ENCODE measurements at regions of chr2 and their contacts with region 1.

Region 1: DNA sequence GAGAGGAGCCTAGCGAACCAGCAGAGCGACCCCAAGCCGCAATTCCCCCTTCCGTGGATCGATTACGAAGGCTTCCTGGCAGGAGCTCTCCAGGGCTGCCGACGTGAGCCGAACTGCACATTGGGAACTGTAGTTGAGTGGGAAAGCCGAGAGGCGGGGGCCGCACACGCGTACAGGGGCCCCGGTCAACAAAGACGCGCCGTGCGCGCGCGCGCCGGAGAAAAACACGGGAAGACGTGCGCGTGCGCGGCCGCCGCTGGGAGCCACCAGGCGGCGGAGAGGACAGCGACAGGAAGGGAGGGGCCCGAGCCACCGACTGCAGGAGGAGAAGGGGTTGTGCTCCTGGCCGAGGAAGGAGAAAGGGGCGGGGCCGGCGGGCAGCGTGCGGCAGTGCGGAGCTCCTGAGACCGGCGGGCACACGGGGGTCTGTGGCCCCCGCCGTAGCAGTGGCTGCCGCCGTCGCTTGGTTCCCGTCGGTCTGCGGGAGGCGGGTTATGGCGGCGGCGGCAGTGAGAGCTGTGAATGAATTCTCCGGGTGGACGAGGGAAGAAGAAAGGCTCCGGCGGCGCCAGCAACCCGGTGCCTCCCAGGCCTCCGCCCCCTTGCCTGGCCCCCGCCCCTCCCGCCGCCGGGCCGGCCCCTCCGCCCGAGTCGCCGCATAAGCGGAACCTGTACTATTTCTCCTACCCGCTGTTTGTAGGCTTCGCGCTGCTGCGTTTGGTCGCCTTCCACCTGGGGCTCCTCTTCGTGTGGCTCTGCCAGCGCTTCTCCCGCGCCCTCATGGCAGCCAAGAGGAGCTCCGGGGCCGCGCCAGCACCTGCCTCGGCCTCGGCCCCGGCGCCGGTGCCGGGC is at the start of gene SPAST:
- DNase-seq: peak; percentile 89 to 97
- ATAC-seq: peak; percentile 85 to 94 (median 86)
- H3K4me3 ChIP-seq: peak within 1 kb of the TSS; percentile 86
- H3K4me3 Mint-ChIP-seq: peak within 1 kb of the TSS; percentile 99
- H3K27ac ChIP-seq: peak within 1 kb of the TSS; percentile 74
- H3K27ac Mint-ChIP-seq: peak within 1 kb of the TSS; percentile 92 to 97
- H3K4me1 ChIP-seq: peaks cover 12% of the 10 kb centered on the region
- H3K4me1 Mint-ChIP-seq: peaks cover 33 to 36% of the 10 kb centered on the region in 2 donors
- H3K27me3 ChIP-seq: no peaks in the 10 kb centered on the region
- H3K27me3 Mint-ChIP-seq: no peaks in the 10 kb centered on the region
- CTCF ChIP-seq: peak; percentile 48
- total RNA-seq, gene SPAST: 16.8 to 27.5 (median 22.5) TPM

Region 2: GRCh38 chr2:31962757-31963361 is 100.7 kb before region 1 on chr2:
- intact Hi-C with region 1: no loop called
- DNase-seq: no peak
- ATAC-seq: no peak
- H3K4me3 ChIP-seq: no peak overlapping the region
- H3K4me3 Mint-ChIP-seq: no peak overlapping the region
- H3K27ac ChIP-seq: no peak overlapping the region
- H3K27ac Mint-ChIP-seq: peak overlapping the region; percentile 16 to 45
- H3K4me1 ChIP-seq: peaks cover 25% of the 10 kb centered on the region
- H3K4me1 Mint-ChIP-seq: peaks cover 40 to 51% of the 10 kb centered on the region in 2 donors
- H3K27me3 ChIP-seq: no peaks in the 10 kb centered on the region
- H3K27me3 Mint-ChIP-seq: no peaks in the 10 kb centered on the region
- CTCF ChIP-seq: no peak

Region 3: GRCh38 chr2:32010670-32011484 is 52.7 kb before region 1 on chr2 and contains the start of gene MEMO1:
- intact Hi-C with region 1: loop called (anchors 1 kb)
- DNase-seq: peak; percentile 83 to 95
- ATAC-seq: peak; percentile 72 to 88 (median 73)
- H3K4me3 ChIP-seq: peak within 1 kb of the TSS; percentile 68
- H3K4me3 Mint-ChIP-seq: peak within 1 kb of the TSS; percentile 92
- H3K27ac ChIP-seq: peak within 1 kb of the TSS; percentile 71
- H3K27ac Mint-ChIP-seq: peak within 1 kb of the TSS; percentile 89 to 93
- H3K4me1 ChIP-seq: peaks cover 22% of the 10 kb centered on the region
- H3K4me1 Mint-ChIP-seq: peaks cover 34 to 42% of the 10 kb centered on the region in 2 donors
- H3K27me3 ChIP-seq: no peaks in the 10 kb centered on the region
- H3K27me3 Mint-ChIP-seq: no peaks in the 10 kb centered on the region
- CTCF ChIP-seq: no peak
- total RNA-seq, gene MEMO1: 48.6 to 51.9 (median 51.7) TPM

Region 4: GRCh38 chr2:32039447-32040219 is 23.9 kb before region 1 on chr2 and contains the start of gene DPY30:
- intact Hi-C with region 1: loop called (anchors 1 kb)
- DNase-seq: peak; percentile 88 to 96
- ATAC-seq: peak; percentile 97 to 98 (median 97)
- H3K4me3 ChIP-seq: peak within 1 kb of the TSS; percentile 61
- H3K4me3 Mint-ChIP-seq: peak within 1 kb of the TSS; percentile 95
- H3K27ac ChIP-seq: peak within 1 kb of the TSS; percentile 79
- H3K27ac Mint-ChIP-seq: peak within 1 kb of the TSS; percentile 92 to 96
- H3K4me1 ChIP-seq: peaks cover 10% of the 10 kb centered on the region
- H3K4me1 Mint-ChIP-seq: peaks cover 9 to 14% of the 10 kb centered on the region in 2 donors
- H3K27me3 ChIP-seq: no peaks in the 10 kb centered on the region
- H3K27me3 Mint-ChIP-seq: no peaks in the 10 kb centered on the region
- CTCF ChIP-seq: no peak
- total RNA-seq, gene DPY30: 24.3 to 36.6 (median 25.7) TPM

Region 5: GRCh38 chr2:32168513-32168912 is 105.0 kb after region 1 on chr2:
- intact Hi-C with region 1: loop called (anchors 5 kb)
- DNase-seq: no peak
- ATAC-seq: no peak
- H3K4me3 ChIP-seq: no peak overlapping the region
- H3K4me3 Mint-ChIP-seq: no peak overlapping the region
- H3K27ac ChIP-seq: no peak overlapping the region
- H3K27ac Mint-ChIP-seq: no peak overlapping the region
- H3K4me1 ChIP-seq: no peaks in the 10 kb centered on the region
- H3K4me1 Mint-ChIP-seq: peaks cover 28 to 38% of the 10 kb centered on the region in 2 donors
- H3K27me3 ChIP-seq: no peaks in the 10 kb centered on the region
- H3K27me3 Mint-ChIP-seq: no peaks in the 10 kb centered on the region
- CTCF ChIP-seq: no peak